ENCODE measurements at regions of chr15 and their contacts with region 1.

Region 1: GRCh38 chr15:94324117-94324826 is 92.9 kb downstream of the MCTP2 start:
- DNase-seq: peak in 1 of 2 donors; percentile 32
- ATAC-seq: peak; percentile 65 to 88 (median 82)
- H3K4me3 ChIP-seq: no peak overlapping the region
- H3K27ac ChIP-seq: no peak overlapping the region
- H3K4me1 ChIP-seq: peaks cover 0 to 28% (median 0%) of the 10 kb centered on the region in 9 donors
- H3K27me3 ChIP-seq: peaks cover 0 to 7% (median 0%) of the 10 kb centered on the region in 7 donors
- CTCF ChIP-seq: peak; percentile 75 to 94 (median 91)

Region 2: DNA sequence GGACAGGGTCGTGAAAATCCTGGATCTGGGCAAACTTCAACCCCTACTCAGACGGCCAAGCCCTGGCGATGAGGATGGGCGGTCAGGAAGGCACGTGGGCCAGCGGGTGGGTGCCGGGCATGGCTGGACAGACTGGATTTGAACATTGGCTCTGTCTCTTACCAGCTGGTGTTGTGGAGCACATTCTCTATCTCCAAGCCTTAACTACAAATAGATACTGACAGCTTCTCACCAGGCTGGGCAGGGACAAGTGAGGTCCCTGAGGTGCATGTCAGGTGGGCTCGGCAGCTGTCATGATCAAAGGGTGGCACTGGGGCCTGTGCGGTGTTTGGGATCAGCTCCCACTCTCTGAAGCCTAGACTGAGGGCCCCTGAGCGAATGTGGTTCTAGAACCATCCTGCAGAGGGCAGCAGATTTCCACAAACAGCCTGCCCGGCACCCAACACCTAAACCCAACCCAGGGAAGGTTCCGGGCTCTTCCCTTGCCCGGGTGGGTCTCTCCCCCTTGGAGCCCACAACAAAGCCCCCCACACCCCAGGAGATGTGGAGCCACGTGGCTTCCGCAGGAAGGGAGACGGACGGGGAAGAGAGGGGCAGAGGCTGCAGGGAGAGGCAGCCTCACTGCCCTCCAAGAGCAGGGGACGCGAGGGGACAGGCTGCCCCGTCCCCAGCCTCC is 1293.7 kb before region 1 on chr15:
- intact Hi-C with region 1: loop called in 5 of 10 experiments (anchors 10 kb)
- DNase-seq: peak; percentile 55 to 75
- ATAC-seq: peak; percentile 49 to 78 (median 74)
- H3K4me3 ChIP-seq: no peak overlapping the region
- H3K27ac ChIP-seq: peak overlapping the region in 9 of 10 donors; percentile 51 to 91 (median 85)
- H3K4me1 ChIP-seq: peaks cover 24 to 55% (median 48%) of the 10 kb centered on the region in 9 donors
- H3K27me3 ChIP-seq: no peaks in the 10 kb centered on the region
- CTCF ChIP-seq: peak; percentile 75 to 92 (median 89)

Region 3: DNA sequence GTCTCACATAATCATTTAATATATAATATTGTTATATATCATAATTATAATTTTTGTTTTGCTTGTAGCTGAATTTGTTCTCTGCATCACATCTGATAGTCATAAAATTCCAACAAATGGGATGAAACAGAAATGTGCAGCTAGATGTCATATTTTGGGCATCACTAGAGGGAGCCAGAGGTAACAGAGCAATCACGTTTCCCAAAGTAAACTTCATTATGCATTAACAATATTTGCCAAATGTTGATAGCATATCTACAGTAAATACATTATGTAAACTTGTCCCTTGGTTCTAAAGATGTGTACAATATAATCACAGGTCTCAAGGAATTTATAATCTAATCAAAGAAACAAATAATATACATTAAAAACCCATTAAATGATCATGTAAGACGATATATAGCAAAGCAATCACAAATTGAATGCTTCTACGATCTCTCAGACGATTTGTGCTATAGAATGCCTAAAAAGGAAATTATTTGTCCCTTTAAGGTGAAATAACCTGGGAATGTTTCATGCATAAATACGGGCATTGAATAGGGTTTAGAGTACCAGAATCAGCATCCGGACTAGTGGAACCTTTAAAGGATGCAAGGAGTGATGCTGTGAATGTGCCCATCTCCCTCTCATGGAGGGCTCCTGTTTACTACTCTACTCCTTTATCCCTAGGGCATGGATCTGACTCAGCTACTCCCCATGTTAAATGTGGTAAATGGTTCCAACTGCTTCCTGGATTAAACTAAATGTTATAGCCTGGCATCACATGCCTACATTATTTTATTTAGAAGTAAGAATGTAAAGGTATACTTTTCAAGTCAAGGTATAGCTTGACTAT is 327.0 kb before region 1 on chr15:
- intact Hi-C with region 1: loop called in 1 of 10 experiments (anchors 10 kb)
- DNase-seq: no peak
- ATAC-seq: no peak
- H3K4me3 ChIP-seq: no peak overlapping the region
- H3K27ac ChIP-seq: no peak overlapping the region
- H3K4me1 ChIP-seq: peaks cover 0 to 8% (median 0%) of the 10 kb centered on the region in 9 donors
- H3K27me3 ChIP-seq: no peaks in the 10 kb centered on the region
- CTCF ChIP-seq: peak; percentile 33 to 75 (median 60)

Region 4: GRCh38 chr15:94163999-94164807 is 160.1 kb before region 1 on chr15:
- intact Hi-C with region 1: loop called (anchors 1 to 5 kb)
- DNase-seq: peak in 1 of 2 donors; percentile 40
- ATAC-seq: peak in 1 of 8 donors; percentile 42
- H3K4me3 ChIP-seq: no peak overlapping the region
- H3K27ac ChIP-seq: no peak overlapping the region
- H3K4me1 ChIP-seq: peaks cover 0 to 2% (median 0%) of the 10 kb centered on the region in 9 donors
- H3K27me3 ChIP-seq: peaks cover 0 to 5% (median 0%) of the 10 kb centered on the region in 7 donors
- CTCF ChIP-seq: peak; percentile 45 to 86 (median 76)

Region 5: DNA sequence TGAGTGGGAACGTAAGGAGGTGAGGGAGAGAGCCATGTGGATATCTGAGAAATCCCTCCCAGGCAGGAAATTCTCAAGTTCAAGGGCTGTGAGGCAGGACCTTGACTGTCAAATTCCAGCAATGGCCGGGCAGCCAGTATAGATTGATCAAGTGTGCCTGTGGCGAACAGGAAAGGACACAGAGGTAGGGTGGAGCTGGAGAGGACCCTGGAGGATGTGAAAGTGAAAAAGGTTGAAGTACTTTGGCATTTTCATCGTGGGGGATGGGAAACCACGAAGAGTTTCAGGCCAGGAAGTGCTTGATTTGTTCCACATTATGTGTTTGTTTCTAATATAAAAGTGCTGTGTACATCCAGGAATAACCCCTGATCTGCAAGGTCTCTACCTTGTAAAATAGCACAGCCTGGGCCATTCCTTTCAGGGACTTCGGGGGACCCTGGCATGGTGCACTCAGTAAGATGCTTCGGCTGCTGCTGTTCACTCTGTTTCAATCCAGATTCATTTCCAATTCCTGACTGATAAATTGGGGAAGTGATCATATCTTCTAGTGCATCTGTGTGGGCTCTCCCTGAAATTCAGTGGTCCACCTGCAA is 63.7 kb after region 1 on chr15:
- intact Hi-C with region 1: no loop called
- DNase-seq: no peak
- ATAC-seq: no peak
- H3K4me3 ChIP-seq: no peak overlapping the region
- H3K27ac ChIP-seq: no peak overlapping the region
- H3K4me1 ChIP-seq: peaks cover 0 to 10% (median 0%) of the 10 kb centered on the region in 9 donors
- H3K27me3 ChIP-seq: peaks cover 0 to 44% (median 0%) of the 10 kb centered on the region in 7 donors
- CTCF ChIP-seq: no peak